GM12878 (cell line): ENCODE measurements at regions of chr11 and their contacts with region 1.

Region 1: GRCh38 chr11:122808478-122808869 is 29.8 kb upstream of the CRTAM start:
- DNase-seq: peak; percentile 66
- ATAC-seq: peak; percentile 81
- H3K4me3 ChIP-seq: no peak overlapping the region
- H3K27ac ChIP-seq: peak overlapping the region; percentile 47; the same call in 1 of the 2 replicates
- H3K4me1 ChIP-seq: peaks cover 18% of the 10 kb centered on the region
- H3K27me3 ChIP-seq: no peaks in the 10 kb centered on the region
- CTCF ChIP-seq: no peak
- EP300 ChIP-seq: no peak
- POLR2A ChIP-seq: no peak
- RAD21 ChIP-seq: no peak

Region 2: GRCh38 chr11:122822241-122822640 is 13.8 kb after region 1 on chr11:
- CTCF ChIA-PET with region 1: interaction called, 9 read pairs
- POLR2A ChIA-PET with region 1: interaction called, 5 read pairs
- RAD21 ChIA-PET with region 1: interaction called, 6 read pairs
- SMC1A ChIA-PET with region 1: interaction called, 20 read pairs
- in situ Hi-C with region 1: no loop called
- intact Hi-C with region 1: no loop called
- DNase-seq: no peak
- ATAC-seq: no peak
- H3K4me3 ChIP-seq: no peak overlapping the region
- H3K27ac ChIP-seq: no peak overlapping the region
- H3K4me1 ChIP-seq: no peaks in the 10 kb centered on the region
- H3K27me3 ChIP-seq: no peaks in the 10 kb centered on the region
- CTCF ChIP-seq: no peak
- EP300 ChIP-seq: no peak
- POLR2A ChIP-seq: no peak
- RAD21 ChIP-seq: no peak

Region 3: GRCh38 chr11:122843281-122844141 is 35.0 kb after region 1 on chr11:
- CTCF ChIA-PET with region 1: interaction called, 484 read pairs
- POLR2A ChIA-PET with region 1: interaction called, 12 read pairs
- RAD21 ChIA-PET with region 1: interaction called, 293 read pairs
- SMC1A ChIA-PET with region 1: interaction called, 485 read pairs
- in situ Hi-C with region 1: no loop called
- intact Hi-C with region 1: no loop called
- DNase-seq: no peak
- ATAC-seq: peak; percentile 87
- H3K4me3 ChIP-seq: no peak overlapping the region
- H3K27ac ChIP-seq: peak overlapping the region; percentile 42; the same call in 1 of the 2 replicates
- H3K4me1 ChIP-seq: peaks cover 11% of the 10 kb centered on the region; the same call in 1 of the 2 replicates
- H3K27me3 ChIP-seq: no peaks in the 10 kb centered on the region
- CTCF ChIP-seq: no peak
- EP300 ChIP-seq: no peak
- POLR2A ChIP-seq: no peak
- RAD21 ChIP-seq: no peak